ENCODE measurements at regions of chr1 and their contacts with region 1.

Region 1: DNA sequence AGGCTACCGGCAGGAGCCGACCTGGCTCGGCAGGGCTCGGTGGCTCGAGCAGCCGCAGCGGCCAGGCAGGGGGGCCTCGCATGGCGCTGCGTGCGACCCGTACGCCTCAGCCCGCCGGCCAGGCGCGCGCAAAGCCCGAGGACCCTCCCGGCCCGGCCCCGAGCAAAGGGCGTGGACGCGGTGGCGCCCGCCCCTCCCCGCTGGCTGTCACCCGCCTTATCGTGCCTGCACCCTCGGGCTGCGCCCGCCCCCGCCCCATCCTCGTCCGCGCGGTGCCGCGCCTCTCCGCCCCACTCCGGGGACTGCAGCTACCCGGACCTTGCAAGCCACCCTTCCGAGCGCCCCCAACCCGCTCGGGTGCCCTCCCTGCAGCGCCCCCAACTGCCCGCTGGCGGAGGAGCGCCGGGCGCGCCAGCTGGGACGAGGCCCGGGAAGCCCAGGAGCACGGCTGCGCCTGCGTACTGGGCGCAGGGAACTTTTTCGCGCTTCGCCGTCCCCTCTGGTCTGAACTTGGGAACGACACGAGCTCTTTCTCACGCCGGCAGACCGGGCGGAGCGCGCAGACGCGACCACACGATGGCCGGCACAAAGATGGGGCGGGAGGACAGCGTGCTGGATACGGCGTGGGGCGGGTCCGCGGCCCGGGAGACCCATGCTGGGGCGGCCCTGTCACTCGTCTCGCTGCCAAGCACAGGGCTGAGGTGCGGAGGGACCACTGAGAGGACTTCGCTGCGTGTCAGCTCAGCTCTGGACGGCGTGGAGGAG is at the start of gene ABCB10:
- DNase-seq: peak; percentile 96 to 99 (median 98)
- ATAC-seq: peak; percentile 89 to 95 (median 93)
- H3K4me3 ChIP-seq: peak within 1 kb of the TSS; percentile 42 to 89 (median 84)
- H3K27ac ChIP-seq: peak within 1 kb of the TSS; percentile 73 to 86 (median 80)
- H3K4me1 ChIP-seq: peaks cover 0 to 26% (median 0%) of the 10 kb centered on the region in 3 donors
- H3K27me3 ChIP-seq: no peaks in the 10 kb centered on the region
- CTCF ChIP-seq: peak; percentile 47 to 79 (median 64)
- total RNA-seq, gene ABCB10: 4.9 to 8.6 (median 7.2) TPM

Region 2: GRCh38 chr1:229625915-229626831 is 67.4 kb after region 1 on chr1 and contains the starts of genes TAF5L and URB2:
- intact Hi-C with region 1: loop called in 2 of 3 experiments (anchors 10 kb)
- DNase-seq: peak; percentile 83 to 95 (median 90)
- ATAC-seq: peak; percentile 94 to 99 (median 98)
- H3K4me3 ChIP-seq: peak within 1 kb of the TSS; percentile 84 to 99 (median 91)
- H3K27ac ChIP-seq: peak within 1 kb of the TSS; percentile 61 to 84 (median 81)
- H3K4me1 ChIP-seq: peaks cover 0 to 21% (median 19%) of the 10 kb centered on the region in 3 donors
- H3K27me3 ChIP-seq: no peaks in the 10 kb centered on the region
- CTCF ChIP-seq: no peak
- total RNA-seq, gene TAF5L: 4.4 to 9.5 (median 7.1) TPM
- total RNA-seq, gene URB2: 2.0 to 4.7 (median 3.9) TPM